HCT116 (cell line): ENCODE measurements at regions of chr5 and their contacts with region 1.

Region 1: GRCh38 chr5:175444060-175444904 is at the start of gene DRD1:
- DNase-seq: no peak
- ATAC-seq: peak; percentile 98
- H3K4me3 ChIP-seq: peak within 1 kb of the TSS; percentile 20 to 42
- H3K27ac ChIP-seq: peak within 1 kb of the TSS; percentile 43; the same call in 1 of the 2 replicates
- H3K4me1 ChIP-seq: peaks cover 9% of the 10 kb centered on the region in 2 experiments; a peak in 2 of 4 replicates
- H3K27me3 ChIP-seq: no peaks in the 10 kb centered on the region
- CTCF ChIP-seq: peak; percentile 66 to 79 (median 79)
- POLR2A ChIP-seq: no peak
- RAD21 ChIP-seq: peak; percentile 91
- total RNA-seq, gene DRD1: 0.54 TPM

Region 2: GRCh38 chr5:174951146-174951780 is 493.0 kb before region 1 on chr5:
- CTCF ChIA-PET with region 1: interaction called, 5 read pairs
- POLR2A ChIA-PET with region 1: no interaction called
- RAD21 ChIA-PET with region 1: no interaction called
- intact Hi-C with region 1: loop called (anchors 1 kb)
- DNase-seq: peak; percentile 71
- ATAC-seq: peak; percentile 98
- H3K4me3 ChIP-seq: no peak overlapping the region
- H3K27ac ChIP-seq: no peak overlapping the region
- H3K4me1 ChIP-seq: no peaks in the 10 kb centered on the region
- H3K27me3 ChIP-seq: no peaks in the 10 kb centered on the region
- CTCF ChIP-seq: peak; percentile 88 to 91 (median 88)
- POLR2A ChIP-seq: no peak
- RAD21 ChIP-seq: peak; percentile 98

Region 3: DNA sequence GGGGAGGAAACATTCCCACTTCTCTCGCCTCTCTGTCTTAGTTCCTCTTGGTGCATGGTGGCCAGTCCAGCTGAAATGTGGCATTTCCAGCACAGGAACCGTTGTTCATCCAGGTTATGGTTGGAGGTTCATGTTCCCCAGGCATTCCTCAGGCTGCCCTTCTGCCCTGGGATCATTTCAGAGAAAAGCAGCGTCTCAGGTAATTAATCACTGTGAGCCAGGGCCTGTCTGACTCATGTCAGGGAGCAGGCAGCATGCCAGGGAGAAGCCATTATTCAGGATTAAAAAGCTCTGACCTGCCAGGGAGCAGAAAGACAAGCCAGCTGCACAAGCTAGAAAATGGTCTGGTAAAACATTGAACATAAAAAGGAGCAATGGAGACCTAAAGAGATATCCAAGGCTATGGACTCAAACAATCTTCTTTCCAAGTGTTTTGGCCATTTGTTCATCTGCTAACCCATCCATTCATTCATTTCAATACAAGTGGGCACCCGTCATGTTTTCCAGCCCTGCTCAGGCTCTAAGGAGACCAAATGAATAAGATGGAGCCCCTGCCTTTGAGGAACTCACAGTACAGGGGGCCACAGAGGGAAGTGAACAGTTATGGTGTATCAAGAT is 241.7 kb before region 1 on chr5:
- CTCF ChIA-PET with region 1: no interaction called
- POLR2A ChIA-PET with region 1: no interaction called
- RAD21 ChIA-PET with region 1: no interaction called
- intact Hi-C with region 1: loop called (anchors 5 kb)
- DNase-seq: peak; percentile 47
- ATAC-seq: peak; percentile 86
- H3K4me3 ChIP-seq: no peak overlapping the region
- H3K27ac ChIP-seq: peak overlapping the region; percentile 35; the same call in 1 of the 2 replicates
- H3K4me1 ChIP-seq: peaks cover 20 to 38% of the 10 kb centered on the region in 2 experiments
- H3K27me3 ChIP-seq: peaks cover 23% of the 10 kb centered on the region; the same call in 1 of the 2 replicates
- CTCF ChIP-seq: no peak
- POLR2A ChIP-seq: no peak
- RAD21 ChIP-seq: no peak